ENCODE measurements at regions of chr2 and their contacts with region 1.

Region 1: GRCh38 chr2:156483741-156484176 is 47.6 kb downstream of the GPD2 start:
- DNase-seq: no peak
- H3K4me3 ChIP-seq: no peak overlapping the region
- H3K27me3 ChIP-seq: no peaks in the 10 kb centered on the region
- CTCF ChIP-seq: no peak

Region 2: DNA sequence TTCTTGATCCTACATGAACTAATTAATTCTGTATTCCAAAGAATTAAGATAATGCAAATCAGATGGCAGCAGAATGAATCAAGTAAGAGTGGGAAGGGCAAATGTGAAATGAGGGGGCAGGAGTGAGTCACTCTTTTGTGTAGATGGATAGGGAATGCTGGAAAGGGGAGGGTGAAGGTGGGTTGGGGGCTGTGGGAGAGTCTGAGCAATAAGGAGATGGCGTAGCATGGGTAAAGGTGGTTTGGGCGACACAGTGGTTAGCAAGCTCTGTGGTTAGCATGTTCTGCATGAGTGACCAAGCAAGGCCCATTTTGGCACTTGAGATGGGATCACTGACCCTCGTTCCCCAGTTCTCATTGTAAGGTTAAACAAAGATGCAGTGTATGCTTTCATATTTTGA is 27.1 kb before region 1 on chr2:
- CTCF ChIA-PET with region 1: no interaction called
- POLR2A ChIA-PET with region 1: interaction called, 12 read pairs
- DNase-seq: no peak
- H3K4me3 ChIP-seq: no peak overlapping the region
- H3K27me3 ChIP-seq: no peaks in the 10 kb centered on the region
- CTCF ChIP-seq: no peak